ENCODE measurements at regions of chrX and their contacts with region 1.

Region 1: GRCh38 chrX:23930894-23931689 is 23.3 kb downstream of the CXorf58 start:
- DNase-seq: no peak
- H3K4me3 Mint-ChIP-seq: peak overlapping the region; percentile 30
- H3K27ac Mint-ChIP-seq: peak overlapping the region; percentile 79
- H3K4me1 Mint-ChIP-seq: peaks cover 16% of the 10 kb centered on the region
- H3K27me3 Mint-ChIP-seq: no peaks in the 10 kb centered on the region

Region 2: GRCh38 chrX:23478056-23478455 is 453.0 kb before region 1 on chrX:
- intact Hi-C with region 1: no loop called
- DNase-seq: no peak
- H3K4me3 Mint-ChIP-seq: no peak overlapping the region
- H3K27ac Mint-ChIP-seq: no peak overlapping the region
- H3K4me1 Mint-ChIP-seq: no peaks in the 10 kb centered on the region
- H3K27me3 Mint-ChIP-seq: no peaks in the 10 kb centered on the region

Region 3: GRCh38 chrX:23952984-23953907 is 22.2 kb after region 1 on chrX:
- intact Hi-C with region 1: loop called (anchors 1 kb)
- DNase-seq: peak; percentile 34
- H3K4me3 Mint-ChIP-seq: peak overlapping the region; percentile 83
- H3K27ac Mint-ChIP-seq: peak overlapping the region; percentile 95
- H3K4me1 Mint-ChIP-seq: peaks cover 27% of the 10 kb centered on the region
- H3K27me3 Mint-ChIP-seq: no peaks in the 10 kb centered on the region

Measured in activated T-helper 2 cell treated with anti-CD3 and anti-CD28 coated beads, Interferon-gamma antibody, Interleukin-2, Interleukin-4, amounts not matched to agents 10 μg/mL and 5 μg/mL and 100 μg/mL, durations not matched to agents 14 hours and 24 hours and 36 hours (primary cell).